ENCODE measurements at regions of chr9 and their contacts with region 1.

Region 1: DNA sequence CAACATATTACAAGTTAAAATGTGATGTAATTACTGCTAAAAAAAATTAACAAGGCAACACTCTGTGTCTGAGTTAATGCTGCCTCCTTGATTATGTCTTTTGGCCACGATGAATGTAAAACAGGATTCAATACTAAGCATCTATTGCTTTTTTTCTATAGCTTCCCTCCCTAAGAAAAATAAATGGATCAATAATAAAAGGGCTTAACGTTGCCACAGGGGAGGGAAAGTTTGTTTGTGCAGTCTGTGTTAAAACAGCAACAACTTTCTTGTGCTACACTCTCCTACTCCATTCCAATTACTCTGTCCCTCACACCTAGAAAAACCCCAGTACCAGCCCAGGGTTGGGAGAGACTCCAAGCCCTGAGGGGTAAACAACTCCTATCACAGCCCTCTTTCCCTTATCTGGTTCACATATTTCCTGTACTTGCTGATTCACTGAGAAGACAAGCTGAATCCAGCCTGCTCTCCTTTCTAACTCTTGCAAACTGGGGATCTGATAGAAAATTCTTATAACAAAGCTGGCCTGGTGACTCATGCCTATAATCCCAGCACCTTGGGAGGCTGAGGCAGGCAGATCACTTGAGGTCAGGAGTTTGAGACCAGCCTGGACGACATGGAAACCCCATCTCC is 44.8 kb downstream of the PTPN3 start:
- DNase-seq: peak; percentile 97
- H3K4me3 ChIP-seq: no peak overlapping the region
- H3K27ac ChIP-seq: peak overlapping the region; percentile 68
- H3K4me1 ChIP-seq: peaks cover 44% of the 10 kb centered on the region
- H3K27me3 ChIP-seq: no peaks in the 10 kb centered on the region
- CTCF ChIP-seq: no peak

Region 2: DNA sequence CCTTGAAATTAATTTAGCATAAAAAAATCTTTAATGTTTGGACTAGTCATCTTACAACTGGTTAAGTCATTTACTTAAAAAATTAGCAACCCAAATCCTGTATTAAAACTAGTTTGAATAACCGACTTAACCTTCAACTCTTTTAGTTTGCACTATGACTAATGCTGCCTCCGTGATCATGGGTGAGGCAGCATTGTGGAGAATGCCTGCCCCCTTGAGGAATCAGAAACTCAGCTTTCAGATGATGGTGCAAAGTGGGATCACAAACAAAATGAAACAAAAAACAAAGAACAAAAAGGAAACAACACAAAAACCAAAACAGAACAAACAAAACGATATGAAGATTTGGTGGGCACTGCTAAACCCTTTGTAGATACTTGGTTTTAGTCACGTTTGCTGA is 199.6 kb after region 1 on chr9:
- CTCF ChIA-PET with region 1: no interaction called
- dilution Hi-C with region 1: no loop called
- in situ Hi-C with region 1: no loop called
- intact Hi-C with region 1: loop called (anchors 2 kb)
- DNase-seq: peak; percentile 44
- H3K4me3 ChIP-seq: no peak overlapping the region
- H3K27ac ChIP-seq: no peak overlapping the region
- H3K4me1 ChIP-seq: no peaks in the 10 kb centered on the region
- H3K27me3 ChIP-seq: peaks cover 7% of the 10 kb centered on the region
- CTCF ChIP-seq: peak; percentile 42 to 60

Region 3: DNA sequence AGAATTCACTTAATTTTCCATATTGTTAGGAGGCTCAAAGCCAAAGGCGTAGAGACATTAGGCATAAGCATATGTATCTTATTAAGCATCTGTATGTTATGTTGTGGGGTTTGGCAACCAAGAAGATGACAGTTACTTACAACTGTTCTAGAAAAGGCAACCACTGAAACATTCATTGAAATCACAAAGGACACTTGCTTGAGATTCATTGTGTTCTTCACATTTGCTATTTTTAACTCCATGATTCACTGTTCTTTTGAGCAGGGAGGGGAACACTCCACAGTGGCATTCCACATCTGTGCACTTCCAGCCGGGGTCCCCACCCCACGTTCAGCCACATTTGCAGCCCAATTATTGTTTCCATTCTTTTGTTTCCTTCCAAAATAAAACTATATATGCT is 433.8 kb after region 1 on chr9:
- CTCF ChIA-PET with region 1: no interaction called
- dilution Hi-C with region 1: no loop called
- in situ Hi-C with region 1: no loop called
- intact Hi-C with region 1: loop called (anchors 5 kb)
- DNase-seq: peak; percentile 40
- H3K4me3 ChIP-seq: no peak overlapping the region
- H3K27ac ChIP-seq: peak overlapping the region; percentile 31
- H3K4me1 ChIP-seq: peaks cover 44% of the 10 kb centered on the region
- H3K27me3 ChIP-seq: no peaks in the 10 kb centered on the region
- CTCF ChIP-seq: no peak

Region 4: DNA sequence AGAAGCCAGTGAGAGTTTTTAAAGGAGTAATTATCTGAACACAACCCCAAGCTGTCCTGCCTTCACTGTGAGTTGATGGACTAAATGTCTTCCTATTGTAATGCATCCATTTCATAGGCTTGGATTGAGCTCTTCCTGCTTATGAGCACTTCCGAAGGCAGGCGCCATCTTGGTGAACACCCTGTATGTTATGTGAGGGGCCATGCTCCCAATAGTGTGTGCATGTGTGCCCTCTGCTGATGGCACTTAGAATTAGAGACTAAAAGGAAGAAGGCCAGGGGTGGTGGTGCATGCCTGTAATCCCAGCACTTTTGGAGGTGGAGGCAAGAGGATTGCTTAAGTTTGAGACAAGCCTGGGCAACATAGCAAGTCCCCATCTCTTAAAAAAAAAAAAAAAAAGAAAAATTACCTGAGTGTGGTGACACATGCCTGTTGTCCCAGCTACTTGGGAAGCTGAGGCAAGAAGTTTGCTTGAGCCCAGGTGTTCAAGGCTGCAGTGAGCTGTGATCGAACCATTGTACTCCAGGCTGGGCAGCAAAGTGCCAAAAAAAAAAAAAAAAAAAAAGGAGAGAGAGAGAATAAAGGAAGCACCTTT is 689.6 kb after region 1 on chr9:
- CTCF ChIA-PET with region 1: interaction called, 19 read pairs
- dilution Hi-C with region 1: no loop called
- in situ Hi-C with region 1: no loop called
- intact Hi-C with region 1: no loop called
- DNase-seq: no peak
- H3K4me3 ChIP-seq: no peak overlapping the region
- H3K27ac ChIP-seq: no peak overlapping the region
- H3K4me1 ChIP-seq: peaks cover 32% of the 10 kb centered on the region
- H3K27me3 ChIP-seq: no peaks in the 10 kb centered on the region
- CTCF ChIP-seq: peak in 1 of 2 donors; percentile 27

Measured in mammary epithelial cell (primary cell).